ENCODE measurements at regions of chr1 and their contacts with region 1.

Region 1: GRCh38 chr1:220430059-220430458 is 97.9 kb upstream of the MARK1 start:
- DNase-seq: peak; percentile 52 to 57
- H3K4me3 ChIP-seq: no peak overlapping the region
- H3K4me3 Mint-ChIP-seq: no peak overlapping the region
- H3K27ac Mint-ChIP-seq: no peak overlapping the region
- H3K4me1 ChIP-seq: peaks cover 7% of the 10 kb centered on the region
- H3K4me1 Mint-ChIP-seq: peaks cover 20% of the 10 kb centered on the region
- H3K27me3 ChIP-seq: peaks cover 3% of the 10 kb centered on the region
- H3K27me3 Mint-ChIP-seq: no peaks in the 10 kb centered on the region
- CTCF ChIP-seq: no peak

Region 2: GRCh38 chr1:220255204-220255603 is 174.9 kb before region 1 on chr1:
- CTCF ChIA-PET with region 1: no interaction called
- POLR2A ChIA-PET with region 1: no interaction called
- intact Hi-C with region 1: no loop called
- DNase-seq: no peak
- H3K4me3 ChIP-seq: no peak overlapping the region
- H3K4me3 Mint-ChIP-seq: no peak overlapping the region
- H3K27ac Mint-ChIP-seq: no peak overlapping the region
- H3K4me1 ChIP-seq: peaks cover 13% of the 10 kb centered on the region
- H3K4me1 Mint-ChIP-seq: peaks cover 16% of the 10 kb centered on the region
- H3K27me3 ChIP-seq: no peaks in the 10 kb centered on the region
- H3K27me3 Mint-ChIP-seq: no peaks in the 10 kb centered on the region
- CTCF ChIP-seq: no peak

Region 3: GRCh38 chr1:220407191-220407590 is 22.9 kb before region 1 on chr1:
- CTCF ChIA-PET with region 1: no interaction called
- POLR2A ChIA-PET with region 1: no interaction called
- intact Hi-C with region 1: loop called (anchors 1 kb)
- DNase-seq: peak; percentile 50 to 51
- H3K4me3 ChIP-seq: no peak overlapping the region
- H3K4me3 Mint-ChIP-seq: no peak overlapping the region
- H3K27ac Mint-ChIP-seq: no peak overlapping the region
- H3K4me1 ChIP-seq: peaks cover 17% of the 10 kb centered on the region; the same call in 1 of the 2 replicates
- H3K4me1 Mint-ChIP-seq: peaks cover 20% of the 10 kb centered on the region
- H3K27me3 ChIP-seq: no peaks in the 10 kb centered on the region
- H3K27me3 Mint-ChIP-seq: no peaks in the 10 kb centered on the region
- CTCF ChIP-seq: no peak

Region 4: DNA sequence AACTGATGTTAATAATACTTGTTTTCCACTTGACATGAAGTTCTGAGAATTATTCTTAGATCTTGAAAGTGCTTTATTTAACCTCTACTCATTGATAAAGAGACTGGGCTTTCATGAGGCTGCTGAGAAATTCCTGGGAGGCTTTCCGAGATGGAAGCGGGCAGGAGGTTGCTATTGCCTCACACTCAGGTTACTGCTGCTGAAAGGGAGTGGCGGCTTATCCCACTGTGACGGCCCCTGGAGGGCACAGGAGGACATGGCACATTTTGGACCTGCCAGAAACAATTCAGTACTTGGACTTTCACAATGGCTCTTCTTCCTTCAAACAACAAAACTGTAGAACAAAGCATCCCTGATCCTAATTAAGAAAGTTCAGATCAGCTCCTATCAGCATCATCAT is 81.7 kb after region 1 on chr1:
- CTCF ChIA-PET with region 1: no interaction called
- POLR2A ChIA-PET with region 1: no interaction called
- intact Hi-C with region 1: loop called (anchors 5 kb)
- DNase-seq: peak; percentile 45 to 52
- H3K4me3 ChIP-seq: no peak overlapping the region
- H3K4me3 Mint-ChIP-seq: no peak overlapping the region
- H3K27ac Mint-ChIP-seq: no peak overlapping the region
- H3K4me1 ChIP-seq: no peaks in the 10 kb centered on the region
- H3K4me1 Mint-ChIP-seq: no peaks in the 10 kb centered on the region
- H3K27me3 ChIP-seq: no peaks in the 10 kb centered on the region
- H3K27me3 Mint-ChIP-seq: peaks cover 6% of the 10 kb centered on the region
- CTCF ChIP-seq: peak; percentile 30 to 57

Region 5: GRCh38 chr1:220748089-220748934 is 318.3 kb after region 1 on chr1 and contains the start of gene MTARC2:
- CTCF ChIA-PET with region 1: no interaction called
- POLR2A ChIA-PET with region 1: no interaction called
- intact Hi-C with region 1: no loop called
- DNase-seq: peak; percentile 80 to 81
- H3K4me3 ChIP-seq: peak within 1 kb of the TSS; percentile 59
- H3K4me3 Mint-ChIP-seq: peak within 1 kb of the TSS; percentile 77
- H3K27ac Mint-ChIP-seq: peak within 1 kb of the TSS; percentile 47
- H3K4me1 ChIP-seq: no peaks in the 10 kb centered on the region
- H3K4me1 Mint-ChIP-seq: peaks cover 13% of the 10 kb centered on the region
- H3K27me3 ChIP-seq: no peaks in the 10 kb centered on the region
- H3K27me3 Mint-ChIP-seq: no peaks in the 10 kb centered on the region
- CTCF ChIP-seq: no peak
- total RNA-seq, gene MTARC2: 15.8 and 16.5 TPM in 2 replicates